ENCODE measurements at regions of chr19 and their contacts with region 1.

Region 1: DNA sequence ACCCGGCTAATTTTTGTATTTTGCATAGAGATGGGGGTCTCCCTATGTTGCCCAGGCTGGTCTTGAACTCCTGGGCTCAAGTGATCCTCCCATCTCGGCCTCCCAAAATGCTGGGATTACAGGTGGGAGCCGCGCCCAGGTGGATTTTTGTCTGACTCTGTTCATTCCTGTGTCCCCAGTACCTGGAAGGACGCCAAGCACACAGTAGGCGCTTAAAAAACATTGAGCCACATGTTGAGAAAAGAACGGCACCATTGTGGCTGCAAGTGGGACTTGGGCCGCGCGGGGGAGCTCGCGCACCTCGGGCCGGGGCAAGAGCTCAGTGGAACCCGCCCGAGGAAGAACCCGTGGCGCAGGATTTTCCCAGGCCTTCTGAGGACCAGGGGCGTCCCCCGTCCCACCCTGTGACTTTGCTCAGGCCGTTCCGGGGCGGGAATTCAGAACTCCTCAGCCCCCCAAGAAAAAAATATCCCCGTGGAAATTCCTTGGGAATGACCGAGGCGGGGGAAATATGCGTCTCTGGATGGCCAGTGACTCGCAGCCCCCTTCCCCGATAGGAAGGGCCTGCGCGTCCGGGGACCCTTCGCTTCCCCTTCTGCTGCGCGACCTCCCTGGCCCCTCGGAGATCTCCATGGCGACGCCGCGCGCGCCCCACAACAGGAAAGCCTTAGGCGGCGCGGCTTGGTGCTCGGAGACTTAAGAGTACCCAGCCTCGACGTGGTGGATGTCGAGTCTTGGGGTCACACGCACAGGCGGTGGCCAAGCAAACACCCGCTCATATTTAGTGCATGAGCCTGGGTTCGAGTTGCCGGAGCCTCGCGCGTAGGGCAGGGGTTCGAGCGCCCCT is 1.4 kb upstream of the ICAM1 start:
- DNase-seq: peak; percentile 81 to 87 (median 85)
- H3K4me3 ChIP-seq: peak overlapping the region; percentile 47 to 82
- H3K4me3 Mint-ChIP-seq: peak overlapping the region; percentile 81 to 91 (median 86)
- H3K27ac ChIP-seq: peak overlapping the region; percentile 88
- H3K27ac Mint-ChIP-seq: peak overlapping the region; percentile 91 to 96 (median 95)
- H3K4me1 ChIP-seq: peaks cover 34% of the 10 kb centered on the region
- H3K4me1 Mint-ChIP-seq: peaks cover 9 to 42% (median 24%) of the 10 kb centered on the region in 4 donors
- H3K27me3 ChIP-seq: no peaks in the 10 kb centered on the region
- H3K27me3 Mint-ChIP-seq: no peaks in the 10 kb centered on the region

Region 2: DNA sequence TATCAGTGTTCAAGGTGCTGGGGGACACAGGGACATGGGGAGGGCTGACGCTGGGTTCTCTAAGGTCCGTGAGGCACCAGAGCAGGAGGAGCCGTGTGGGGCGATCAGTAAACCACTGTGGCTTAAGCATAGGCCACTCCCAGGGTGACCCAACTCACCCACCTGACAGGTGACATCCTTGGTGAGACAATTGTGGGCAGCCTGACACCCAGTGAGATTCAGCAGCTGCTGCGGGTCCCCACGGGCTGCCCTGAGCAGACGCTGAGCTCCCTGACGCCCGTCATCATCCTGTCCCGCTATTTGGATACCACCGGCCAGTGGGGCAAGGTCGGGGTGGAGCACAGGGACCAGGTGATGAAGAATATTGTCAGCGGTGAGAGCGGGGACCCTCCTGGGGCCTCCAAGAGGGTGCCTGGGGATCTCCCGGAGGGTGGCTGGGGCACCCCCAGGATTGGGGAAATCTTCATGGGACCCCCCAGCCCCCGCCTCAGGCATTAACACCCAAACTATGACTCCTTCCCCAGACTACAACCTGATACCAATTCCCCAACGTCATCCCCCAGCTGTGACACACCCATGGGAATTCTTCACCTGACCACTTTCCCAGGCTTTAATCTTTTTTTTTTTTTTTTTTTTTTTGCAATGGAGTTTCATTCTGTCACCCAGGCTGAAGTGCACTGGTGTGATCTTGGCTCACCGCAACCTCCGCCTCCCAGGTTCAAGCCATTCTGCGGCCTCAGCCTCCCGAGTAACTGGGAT is 216.8 kb before region 1 on chr19:
- CTCF ChIA-PET with region 1: no interaction called
- POLR2A ChIA-PET with region 1: no interaction called
- intact Hi-C with region 1: no loop called
- DNase-seq: no peak
- H3K4me3 ChIP-seq: no peak overlapping the region
- H3K4me3 Mint-ChIP-seq: no peak overlapping the region
- H3K27ac ChIP-seq: no peak overlapping the region
- H3K27ac Mint-ChIP-seq: no peak overlapping the region
- H3K4me1 ChIP-seq: no peaks in the 10 kb centered on the region
- H3K4me1 Mint-ChIP-seq: no peaks in the 10 kb centered on the region
- H3K27me3 ChIP-seq: no peaks in the 10 kb centered on the region
- H3K27me3 Mint-ChIP-seq: no peaks in the 10 kb centered on the region

Region 3: GRCh38 chr19:10230861-10231611 is 38.5 kb before region 1 on chr19 and contains the start of gene S1PR2:
- CTCF ChIA-PET with region 1: interaction called, 5 read pairs
- POLR2A ChIA-PET with region 1: interaction called, 12 read pairs
- intact Hi-C with region 1: no loop called
- DNase-seq: peak; percentile 67 to 86 (median 75)
- H3K4me3 ChIP-seq: peak within 1 kb of the TSS; percentile 69 to 77
- H3K4me3 Mint-ChIP-seq: peak within 1 kb of the TSS; percentile 87 to 92 (median 90)
- H3K27ac ChIP-seq: peak within 1 kb of the TSS; percentile 92
- H3K27ac Mint-ChIP-seq: peak within 1 kb of the TSS; percentile 92 to 97 (median 94)
- H3K4me1 ChIP-seq: peaks cover 37% of the 10 kb centered on the region
- H3K4me1 Mint-ChIP-seq: peaks cover 20 to 52% (median 30%) of the 10 kb centered on the region in 4 donors
- H3K27me3 ChIP-seq: no peaks in the 10 kb centered on the region
- H3K27me3 Mint-ChIP-seq: no peaks in the 10 kb centered on the region
- total RNA-seq, gene S1PR2: 9.0 to 9.4 TPM

Region 4: GRCh38 chr19:10279737-10280442 is 10.3 kb after region 1 on chr19:
- CTCF ChIA-PET with region 1: interaction called, 25 read pairs
- POLR2A ChIA-PET with region 1: interaction called, 9 read pairs
- intact Hi-C with region 1: no loop called
- DNase-seq: no peak
- H3K4me3 ChIP-seq: no peak overlapping the region
- H3K4me3 Mint-ChIP-seq: no peak overlapping the region
- H3K27ac ChIP-seq: no peak overlapping the region
- H3K27ac Mint-ChIP-seq: peak overlapping the region in 2 of 7 donors; percentile 20 to 70
- H3K4me1 ChIP-seq: no peaks in the 10 kb centered on the region
- H3K4me1 Mint-ChIP-seq: peaks cover 2 to 10% (median 7%) of the 10 kb centered on the region in 4 donors
- H3K27me3 ChIP-seq: no peaks in the 10 kb centered on the region
- H3K27me3 Mint-ChIP-seq: no peaks in the 10 kb centered on the region

Region 5: DNA sequence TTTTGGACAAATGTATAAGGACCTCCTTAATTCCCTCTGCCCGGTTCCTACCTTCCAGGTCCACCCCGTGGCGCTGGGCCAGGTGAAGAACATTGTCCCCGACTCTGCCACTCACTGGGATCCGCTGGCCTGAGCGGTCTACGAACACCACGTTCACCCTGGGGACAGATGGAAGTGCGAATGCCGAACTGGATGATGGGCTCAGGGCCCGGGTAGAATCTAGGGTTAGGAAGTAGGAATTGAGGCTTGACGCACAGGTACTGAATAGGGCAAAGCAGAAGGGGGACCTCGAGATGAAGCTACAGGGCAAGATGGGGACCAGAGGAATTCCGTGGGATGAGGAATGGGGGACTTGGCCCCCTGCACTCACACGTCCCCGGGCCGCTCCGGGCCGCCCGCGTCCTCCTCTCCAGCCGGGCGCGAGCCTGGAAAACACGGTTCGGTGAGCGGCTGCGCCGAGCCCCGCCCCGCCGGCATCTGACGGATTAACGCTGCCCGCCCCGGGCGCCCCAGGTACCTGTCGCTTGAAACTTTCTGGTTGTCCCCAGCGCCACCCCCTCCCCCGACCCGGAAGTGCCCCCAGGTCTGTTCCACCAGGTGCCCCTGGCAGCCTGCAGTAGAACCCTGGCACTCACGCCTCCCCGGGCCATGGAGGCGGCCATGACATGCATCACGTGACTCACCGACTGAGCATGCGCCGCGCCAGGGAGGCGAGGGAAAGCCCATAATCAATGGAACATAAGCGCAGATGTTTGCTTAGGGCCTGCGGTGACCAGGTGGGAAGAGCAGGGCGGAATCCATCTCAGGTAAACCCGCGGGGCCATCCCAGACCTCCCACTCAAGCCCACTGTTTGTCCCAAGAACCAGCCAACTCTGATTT is 46.0 kb after region 1 on chr19 and contains the start of gene FDX2:
- CTCF ChIA-PET with region 1: interaction called, 4 read pairs
- POLR2A ChIA-PET with region 1: interaction called, 12 read pairs
- intact Hi-C with region 1: no loop called
- DNase-seq: peak; percentile 83 to 93 (median 85)
- H3K4me3 ChIP-seq: peak within 1 kb of the TSS; percentile 57 to 93
- H3K4me3 Mint-ChIP-seq: peak within 1 kb of the TSS; percentile 79 to 97 (median 90)
- H3K27ac ChIP-seq: peak within 1 kb of the TSS; percentile 52
- H3K27ac Mint-ChIP-seq: peak within 1 kb of the TSS; percentile 72 to 95 (median 90)
- H3K4me1 ChIP-seq: peaks cover 17% of the 10 kb centered on the region
- H3K4me1 Mint-ChIP-seq: peaks cover 9 to 20% (median 11%) of the 10 kb centered on the region in 4 donors
- H3K27me3 ChIP-seq: no peaks in the 10 kb centered on the region
- H3K27me3 Mint-ChIP-seq: no peaks in the 10 kb centered on the region
- total RNA-seq, gene FDX2: 10.7 to 11.3 TPM

Region 6: DNA sequence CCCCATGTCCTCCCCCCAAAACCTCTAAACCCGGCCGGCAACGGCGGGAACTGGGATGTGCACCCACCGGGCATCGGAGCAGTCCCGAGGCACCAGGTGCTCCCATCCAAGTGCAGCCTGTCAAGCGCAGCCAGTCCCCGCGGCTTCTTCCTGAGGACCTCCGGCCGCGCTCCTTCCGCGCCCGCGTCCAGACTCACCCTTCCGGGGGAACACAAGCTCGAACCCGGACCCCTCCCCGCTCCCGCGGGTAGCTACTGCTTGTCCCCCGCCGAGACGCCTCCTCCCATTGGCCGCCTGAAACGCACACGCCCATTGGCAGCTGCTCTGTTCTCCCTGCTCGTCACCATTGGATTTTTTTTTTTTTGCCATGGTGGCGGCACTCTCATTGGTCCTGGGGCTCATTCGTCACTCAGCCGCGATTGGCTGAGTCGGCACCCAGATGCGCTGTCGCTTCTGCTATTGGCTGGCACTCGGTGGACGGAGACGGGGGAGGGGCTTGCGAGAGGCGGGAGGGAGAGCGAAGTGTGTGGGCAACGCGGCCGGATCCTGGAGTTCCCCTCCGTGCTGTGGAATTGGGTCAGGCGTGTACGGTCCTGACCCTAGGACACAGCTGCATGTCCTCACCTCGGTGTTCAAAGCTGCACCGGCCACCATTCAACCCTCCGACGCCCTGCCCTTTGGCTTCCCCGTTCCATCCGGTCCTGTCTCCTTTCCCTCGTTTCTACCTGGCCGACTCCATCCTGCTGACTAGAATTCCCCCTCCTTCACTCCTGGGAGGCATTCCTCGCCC is 111.0 kb after region 1 on chr19 and contains the start of gene TYK2:
- CTCF ChIA-PET with region 1: interaction called, 32 read pairs
- POLR2A ChIA-PET with region 1: interaction called, 67 read pairs
- intact Hi-C with region 1: loop called (anchors 2 kb)
- DNase-seq: peak; percentile 96 to 98 (median 97)
- H3K4me3 ChIP-seq: peak within 1 kb of the TSS; percentile 79 to 91
- H3K4me3 Mint-ChIP-seq: peak within 1 kb of the TSS; percentile 93 to 98 (median 96)
- H3K27ac ChIP-seq: peak within 1 kb of the TSS; percentile 89
- H3K27ac Mint-ChIP-seq: peak within 1 kb of the TSS; percentile 81 to 99 (median 98)
- H3K4me1 ChIP-seq: peaks cover 13% of the 10 kb centered on the region
- H3K4me1 Mint-ChIP-seq: peaks cover 18 to 28% (median 23%) of the 10 kb centered on the region in 4 donors
- H3K27me3 ChIP-seq: no peaks in the 10 kb centered on the region
- H3K27me3 Mint-ChIP-seq: no peaks in the 10 kb centered on the region
- total RNA-seq, gene TYK2: 297 to 314 TPM

Region 7: DNA sequence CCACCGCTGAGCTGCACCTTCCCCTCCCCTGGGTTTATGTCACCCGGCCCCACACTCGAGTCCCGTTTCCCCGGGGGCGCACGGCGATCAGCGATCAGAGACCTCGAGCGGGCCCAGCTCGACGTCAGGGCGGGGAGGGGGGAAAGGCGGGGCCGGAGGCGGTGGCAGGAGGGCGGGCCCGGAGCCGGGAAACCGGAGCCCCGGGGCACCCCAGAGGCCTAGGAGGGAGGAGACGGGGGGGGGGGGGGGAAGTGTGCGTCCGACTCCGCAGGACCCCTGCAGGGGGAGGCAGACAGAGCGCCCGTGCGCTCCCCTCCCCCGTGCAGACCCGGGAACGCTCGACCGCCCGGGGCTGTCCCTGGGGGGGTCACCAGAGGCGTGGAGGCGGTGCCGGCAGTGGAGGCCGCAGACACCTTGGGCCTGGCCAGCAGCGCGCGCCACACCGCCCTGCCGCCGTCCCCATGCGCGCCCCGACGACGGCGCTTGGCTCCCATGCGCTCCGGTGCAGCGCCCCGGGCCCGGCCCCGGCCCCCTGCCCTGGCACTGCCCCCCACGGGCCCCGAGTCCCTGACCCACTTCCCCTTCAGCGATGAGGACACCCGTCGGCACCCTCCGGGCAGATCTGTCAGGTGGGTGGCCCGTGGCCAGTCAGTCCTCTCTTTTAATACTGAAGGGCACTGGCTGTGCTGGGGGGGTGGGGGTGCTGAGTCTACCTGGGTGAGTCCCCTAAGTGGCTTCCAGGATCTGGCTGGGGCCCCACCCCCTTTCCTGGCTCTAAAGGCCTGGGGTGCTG is 162.6 kb after region 1 on chr19:
- CTCF ChIA-PET with region 1: interaction called, 10 read pairs
- POLR2A ChIA-PET with region 1: interaction called, 3 read pairs
- intact Hi-C with region 1: no loop called
- DNase-seq: peak; percentile 61 to 82 (median 68)
- H3K4me3 ChIP-seq: peak overlapping the region in 1 of 2 donors; percentile 43
- H3K4me3 Mint-ChIP-seq: peak overlapping the region; percentile 83 to 96 (median 90)
- H3K27ac ChIP-seq: peak overlapping the region; percentile 50
- H3K27ac Mint-ChIP-seq: peak overlapping the region; percentile 94 to 99 (median 98)
- H3K4me1 ChIP-seq: peaks cover 50% of the 10 kb centered on the region
- H3K4me1 Mint-ChIP-seq: peaks cover 28 to 62% (median 44%) of the 10 kb centered on the region in 4 donors
- H3K27me3 ChIP-seq: no peaks in the 10 kb centered on the region
- H3K27me3 Mint-ChIP-seq: peaks cover 8 to 19% of the 10 kb centered on the region in 2 donors